ENCODE measurements at regions of chr12 and their contacts with region 1.

Region 1: GRCh38 chr12:53065975-53066931 is 12.9 kb downstream of the SPRYD3 start:
- DNase-seq: peak; percentile 76
- H3K4me3 Mint-ChIP-seq: no peak overlapping the region
- H3K27ac Mint-ChIP-seq: no peak overlapping the region
- H3K4me1 Mint-ChIP-seq: peaks cover 8% of the 10 kb centered on the region
- H3K27me3 Mint-ChIP-seq: no peaks in the 10 kb centered on the region

Region 2: DNA sequence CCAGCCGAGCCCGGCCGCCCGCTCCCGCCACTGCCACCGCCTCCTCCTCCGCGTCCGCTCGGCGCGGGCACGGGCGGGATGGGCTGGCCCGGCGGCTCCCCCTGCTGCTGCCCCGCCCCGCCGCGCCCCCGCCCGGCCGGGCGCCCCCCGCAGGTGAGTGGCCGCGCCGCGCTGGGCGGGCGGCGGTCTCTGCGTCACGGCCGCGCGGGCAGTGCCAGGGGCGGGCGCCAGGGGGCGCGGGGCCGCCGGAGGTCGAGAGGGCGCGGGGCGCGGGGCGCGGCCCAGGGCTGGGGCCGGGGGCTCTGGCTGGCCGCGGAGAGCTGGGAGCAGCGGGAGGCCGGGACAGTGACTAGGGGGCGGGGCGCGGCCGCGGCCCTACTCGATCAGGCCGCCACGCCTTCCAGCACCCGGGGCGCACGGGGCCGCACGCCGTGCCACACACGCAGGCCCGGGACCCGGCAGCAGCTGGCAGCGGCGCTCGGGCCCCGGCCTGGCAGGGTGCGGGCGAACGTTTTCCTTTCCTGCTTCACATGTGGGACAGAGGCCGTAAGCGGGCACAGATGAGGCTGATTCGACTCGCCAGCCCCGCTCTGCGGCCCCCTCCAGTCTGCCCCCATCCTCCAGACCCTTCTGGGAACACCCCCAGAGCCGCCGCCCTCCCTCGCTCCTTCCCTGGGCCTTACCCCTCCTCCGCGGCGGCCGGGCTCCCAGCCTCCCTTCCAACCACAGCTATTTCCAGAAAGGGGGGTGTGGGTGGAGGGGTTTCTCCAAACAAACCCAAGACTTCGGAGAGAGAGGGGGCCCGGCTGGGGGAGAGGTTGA is 18.8 kb before region 1 on chr12:
- CTCF ChIA-PET with region 1: interaction called, 39 read pairs
- POLR2A ChIA-PET with region 1: no interaction called
- intact Hi-C with region 1: no loop called
- DNase-seq: peak; percentile 74
- H3K4me3 Mint-ChIP-seq: peak overlapping the region; percentile 32
- H3K27ac Mint-ChIP-seq: no peak overlapping the region
- H3K4me1 Mint-ChIP-seq: peaks cover 29% of the 10 kb centered on the region
- H3K27me3 Mint-ChIP-seq: no peaks in the 10 kb centered on the region

Region 3: DNA sequence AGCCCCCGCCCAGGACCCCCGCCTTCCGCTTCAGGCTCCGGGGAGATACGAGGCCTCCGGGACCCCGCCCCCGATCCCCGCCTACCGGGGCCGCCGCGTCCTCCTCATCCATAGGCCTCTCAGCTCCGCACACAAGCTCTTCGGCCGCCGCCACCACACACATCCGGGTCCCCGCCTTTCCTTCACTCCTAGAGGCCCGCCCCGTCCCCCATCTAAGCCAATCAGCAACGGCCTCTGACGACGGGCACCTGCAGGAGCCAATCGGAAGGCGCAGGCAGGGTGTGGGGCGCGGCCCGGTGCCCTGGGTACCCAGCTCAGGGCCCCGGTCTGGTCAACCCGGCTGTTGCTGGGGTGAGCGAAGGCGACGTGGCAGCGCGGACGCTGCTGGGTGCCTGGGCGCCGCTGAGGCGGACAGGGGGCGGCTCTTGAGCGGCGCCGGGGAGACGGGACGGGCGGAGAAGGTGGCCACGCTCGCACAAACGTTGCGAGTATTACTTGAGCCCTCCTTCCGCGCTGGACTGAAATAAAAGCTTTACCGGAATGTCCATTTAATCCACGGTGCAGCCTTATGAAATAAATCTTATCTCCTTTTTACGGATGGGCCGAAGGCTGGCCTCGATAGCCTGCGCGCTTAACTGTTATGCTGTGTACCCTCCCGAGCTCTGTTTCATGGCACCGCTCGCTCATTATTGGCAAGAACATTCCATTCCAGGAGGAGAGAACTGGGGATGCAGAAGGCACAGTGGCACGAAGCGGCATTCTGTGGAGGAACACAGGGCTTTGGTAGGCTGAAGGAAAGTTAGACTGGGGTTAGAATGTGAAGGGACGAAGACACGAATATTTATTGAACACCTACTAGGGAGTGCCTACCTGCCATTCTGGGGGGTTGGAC is 13.2 kb after region 1 on chr12 and contains the start of gene SPRYD3:
- CTCF ChIA-PET with region 1: interaction called, 122 read pairs
- POLR2A ChIA-PET with region 1: interaction called, 5 read pairs
- intact Hi-C with region 1: no loop called
- DNase-seq: peak; percentile 98
- H3K4me3 Mint-ChIP-seq: peak within 1 kb of the TSS; percentile 85
- H3K27ac Mint-ChIP-seq: peak within 1 kb of the TSS; percentile 81
- H3K4me1 Mint-ChIP-seq: peaks cover 32% of the 10 kb centered on the region
- H3K27me3 Mint-ChIP-seq: no peaks in the 10 kb centered on the region
- total RNA-seq, gene SPRYD3: 32.8 to 35.4 TPM

Region 4: DNA sequence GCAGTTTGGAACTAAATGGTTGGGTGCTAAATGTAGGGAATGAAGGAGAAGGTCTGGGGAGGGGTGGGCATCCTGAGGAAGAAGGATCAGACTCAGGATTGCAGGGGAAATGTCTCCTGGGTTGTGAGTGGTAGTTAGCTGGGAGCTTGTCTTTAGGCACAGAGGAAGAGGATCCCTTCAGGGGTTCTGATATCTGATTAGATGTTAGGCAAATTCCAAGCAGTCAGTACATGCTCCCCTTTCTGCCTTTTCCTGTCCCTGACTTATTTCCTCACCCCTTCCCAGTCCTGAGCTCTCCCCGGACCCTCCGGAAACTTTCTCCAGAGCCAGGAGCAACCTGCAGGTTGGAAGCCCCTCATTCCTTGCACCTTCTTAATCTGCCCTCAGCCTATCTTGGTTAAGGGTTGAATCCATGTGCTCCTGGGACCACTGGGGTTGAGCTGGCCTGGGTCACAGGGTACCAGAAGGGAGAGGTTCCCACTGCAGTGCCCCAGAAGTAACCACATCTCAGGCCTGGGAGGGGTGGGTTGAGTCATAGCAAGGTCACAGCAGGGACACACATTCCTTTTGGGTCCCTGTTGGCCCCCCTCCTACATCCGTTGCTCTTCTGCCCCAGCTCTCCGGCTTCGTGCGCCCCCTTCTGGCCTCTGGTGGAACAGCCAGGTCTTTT is 32.9 kb after region 1 on chr12:
- CTCF ChIA-PET with region 1: interaction called, 348 read pairs
- POLR2A ChIA-PET with region 1: interaction called, 30 read pairs
- intact Hi-C with region 1: loop called (anchors 1 kb)
- DNase-seq: peak; percentile 95
- H3K4me3 Mint-ChIP-seq: peak overlapping the region; percentile 13
- H3K27ac Mint-ChIP-seq: peak overlapping the region; percentile 56
- H3K4me1 Mint-ChIP-seq: peaks cover 41% of the 10 kb centered on the region
- H3K27me3 Mint-ChIP-seq: peaks cover 5% of the 10 kb centered on the region

Region 5: DNA sequence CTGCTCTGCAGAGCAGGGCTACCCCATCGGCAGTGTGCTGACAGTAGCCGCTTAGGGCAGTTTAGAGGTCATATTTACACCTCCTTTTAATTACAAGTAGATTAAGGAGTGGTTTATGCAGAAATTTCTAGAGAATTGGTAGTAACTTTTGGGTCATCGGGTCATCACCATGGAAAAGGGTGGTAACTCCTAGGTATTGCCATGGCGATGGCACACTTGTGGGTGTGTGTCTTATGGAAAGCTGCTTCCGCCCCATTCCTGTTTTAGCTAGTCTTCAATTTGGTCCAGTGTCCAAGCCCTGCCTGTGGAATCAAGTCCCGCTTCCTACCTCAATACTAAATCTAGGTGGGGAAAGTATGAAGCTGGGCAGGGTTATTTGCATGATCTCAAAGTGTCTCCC is 84.8 kb after region 1 on chr12:
- CTCF ChIA-PET with region 1: no interaction called
- POLR2A ChIA-PET with region 1: no interaction called
- intact Hi-C with region 1: no loop called
- DNase-seq: no peak
- H3K4me3 Mint-ChIP-seq: no peak overlapping the region
- H3K27ac Mint-ChIP-seq: no peak overlapping the region
- H3K4me1 Mint-ChIP-seq: no peaks in the 10 kb centered on the region
- H3K27me3 Mint-ChIP-seq: no peaks in the 10 kb centered on the region

Region 6: GRCh38 chr12:53200458-53201176 is 134.4 kb after region 1 on chr12:
- CTCF ChIA-PET with region 1: interaction called, 26 read pairs
- POLR2A ChIA-PET with region 1: no interaction called
- intact Hi-C with region 1: no loop called
- DNase-seq: peak; percentile 77
- H3K4me3 Mint-ChIP-seq: peak overlapping the region; percentile 45
- H3K27ac Mint-ChIP-seq: peak overlapping the region; percentile 88
- H3K4me1 Mint-ChIP-seq: peaks cover 72% of the 10 kb centered on the region
- H3K27me3 Mint-ChIP-seq: no peaks in the 10 kb centered on the region

Measured in activated CD4-positive, alpha-beta memory T cell treated with anti-CD3 and anti-CD28 coated beads for 36 hours (primary cell).